PC-9 (cell line): ENCODE measurements at regions of chr10 and their contacts with region 1.

Region 1: DNA sequence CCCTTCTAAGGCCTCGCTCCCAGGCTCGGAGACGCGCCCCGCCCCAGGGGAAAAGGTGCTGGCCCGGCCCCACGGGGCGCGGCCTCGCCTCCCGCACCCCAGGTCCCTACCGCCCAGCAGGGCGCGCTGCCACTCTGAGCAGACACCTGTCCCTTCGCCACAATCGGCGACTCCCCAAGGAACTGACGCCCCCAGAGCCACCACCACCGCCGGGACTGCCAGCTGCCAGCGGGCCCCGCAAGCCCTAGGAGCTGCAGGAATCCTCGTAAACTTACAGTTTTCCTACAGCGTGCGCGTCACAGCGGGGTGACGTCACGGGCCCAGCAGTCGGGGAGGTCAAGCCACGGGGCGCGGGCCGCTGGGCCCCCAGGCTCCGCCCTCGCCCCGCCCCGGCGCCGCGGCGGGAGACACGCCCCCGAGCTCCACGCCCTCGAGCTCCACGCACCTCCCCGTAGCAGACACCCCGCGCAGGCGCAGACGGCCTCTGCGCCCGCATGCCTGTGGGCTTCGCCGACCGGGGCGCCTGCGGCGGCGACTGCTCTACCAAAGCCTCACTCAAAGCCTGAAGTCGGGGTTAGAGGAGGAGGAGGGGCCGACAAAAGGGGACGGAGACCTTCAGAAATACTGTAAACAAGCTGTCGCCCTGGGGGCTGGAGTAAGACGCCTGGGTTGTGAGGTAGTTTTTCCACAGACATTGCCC is at the start of gene ZNF438:
- DNase-seq: peak; percentile 72 to 95
- H3K4me3 ChIP-seq: peak within 1 kb of the TSS; percentile 70
- H3K27ac ChIP-seq: peak within 1 kb of the TSS; percentile 93
- H3K4me1 ChIP-seq: peaks cover 24% of the 10 kb centered on the region
- H3K27me3 ChIP-seq: no peaks in the 10 kb centered on the region
- CTCF ChIP-seq: peak; percentile 66
- total RNA-seq, gene ZNF438: 4.6 and 4.7 TPM in 2 replicates

Region 2: GRCh38 chr10:30671026-30671616 is 360.6 kb before region 1 on chr10:
- CTCF ChIA-PET with region 1: no interaction called
- POLR2A ChIA-PET with region 1: no interaction called
- intact Hi-C with region 1: no loop called
- DNase-seq: peak; percentile 33 to 39
- H3K4me3 ChIP-seq: peak overlapping the region; percentile 26; the same call in 1 of the 2 replicates
- H3K27ac ChIP-seq: no peak overlapping the region
- H3K4me1 ChIP-seq: no peaks in the 10 kb centered on the region
- H3K27me3 ChIP-seq: no peaks in the 10 kb centered on the region
- CTCF ChIP-seq: peak; percentile 80

Region 3: GRCh38 chr10:30722956-30723620 is 308.6 kb before region 1 on chr10:
- CTCF ChIA-PET with region 1: no interaction called
- POLR2A ChIA-PET with region 1: no interaction called
- intact Hi-C with region 1: loop called (anchors 2 kb)
- DNase-seq: no peak
- H3K4me3 ChIP-seq: no peak overlapping the region
- H3K27ac ChIP-seq: no peak overlapping the region
- H3K4me1 ChIP-seq: 0 out of 2 replicates have a peak, but pooled peaks cover 4% of the 10 kb centered on the region
- H3K27me3 ChIP-seq: no peaks in the 10 kb centered on the region
- CTCF ChIP-seq: no peak

Region 4: GRCh38 chr10:31099664-31100063 is 68.0 kb after region 1 on chr10:
- CTCF ChIA-PET with region 1: interaction called, 3 read pairs
- POLR2A ChIA-PET with region 1: interaction called, 4 read pairs
- intact Hi-C with region 1: loop called (anchors 2 kb)
- DNase-seq: peak; percentile 84 to 89
- H3K4me3 ChIP-seq: no peak overlapping the region; the same call in 1 of the 2 replicates
- H3K27ac ChIP-seq: peak overlapping the region; percentile 87
- H3K4me1 ChIP-seq: peaks cover 30% of the 10 kb centered on the region
- H3K27me3 ChIP-seq: no peaks in the 10 kb centered on the region
- CTCF ChIP-seq: no peak

Region 5: GRCh38 chr10:31318854-31319601 is 287.3 kb after region 1 on chr10 and contains the start of gene ZEB1:
- CTCF ChIA-PET with region 1: no interaction called
- POLR2A ChIA-PET with region 1: interaction called, 8 read pairs
- intact Hi-C with region 1: loop called (anchors 1 kb)
- DNase-seq: peak; percentile 66 to 77
- H3K4me3 ChIP-seq: peak within 1 kb of the TSS; percentile 84
- H3K27ac ChIP-seq: peak within 1 kb of the TSS; percentile 65
- H3K4me1 ChIP-seq: no peaks in the 10 kb centered on the region; the same call in 1 of the 2 replicates
- H3K27me3 ChIP-seq: 0 out of 2 replicates have a peak, but pooled peaks cover 4% of the 10 kb centered on the region
- CTCF ChIP-seq: no peak
- total RNA-seq, gene ZEB1: 1.0 and 1.4 TPM in 2 replicates

Region 6: GRCh38 chr10:31490858-31491504 is 459.3 kb after region 1 on chr10:
- CTCF ChIA-PET with region 1: interaction called, 5 read pairs
- POLR2A ChIA-PET with region 1: no interaction called
- intact Hi-C with region 1: loop called (anchors 1 kb)
- DNase-seq: peak in 1 of 2 experiments; percentile 19
- H3K4me3 ChIP-seq: no peak overlapping the region
- H3K27ac ChIP-seq: no peak overlapping the region
- H3K4me1 ChIP-seq: no peaks in the 10 kb centered on the region
- H3K27me3 ChIP-seq: no peaks in the 10 kb centered on the region
- CTCF ChIP-seq: peak; percentile 68

Region 7: GRCh38 chr10:31836569-31837406 is 805.1 kb after region 1 on chr10:
- CTCF ChIA-PET with region 1: no interaction called
- POLR2A ChIA-PET with region 1: interaction called, 29 read pairs
- intact Hi-C with region 1: no loop called
- DNase-seq: peak in 1 of 2 experiments; percentile 7
- H3K4me3 ChIP-seq: no peak overlapping the region
- H3K27ac ChIP-seq: no peak overlapping the region
- H3K4me1 ChIP-seq: no peaks in the 10 kb centered on the region
- H3K27me3 ChIP-seq: no peaks in the 10 kb centered on the region
- CTCF ChIP-seq: peak; percentile 60